Activated CD4-positive, alpha-beta T cell treated with anti-CD3 and anti-CD28 coated beads for 36 hours (primary cell): ENCODE measurements at regions of chr14 and their contacts with region 1.

Region 1: DNA sequence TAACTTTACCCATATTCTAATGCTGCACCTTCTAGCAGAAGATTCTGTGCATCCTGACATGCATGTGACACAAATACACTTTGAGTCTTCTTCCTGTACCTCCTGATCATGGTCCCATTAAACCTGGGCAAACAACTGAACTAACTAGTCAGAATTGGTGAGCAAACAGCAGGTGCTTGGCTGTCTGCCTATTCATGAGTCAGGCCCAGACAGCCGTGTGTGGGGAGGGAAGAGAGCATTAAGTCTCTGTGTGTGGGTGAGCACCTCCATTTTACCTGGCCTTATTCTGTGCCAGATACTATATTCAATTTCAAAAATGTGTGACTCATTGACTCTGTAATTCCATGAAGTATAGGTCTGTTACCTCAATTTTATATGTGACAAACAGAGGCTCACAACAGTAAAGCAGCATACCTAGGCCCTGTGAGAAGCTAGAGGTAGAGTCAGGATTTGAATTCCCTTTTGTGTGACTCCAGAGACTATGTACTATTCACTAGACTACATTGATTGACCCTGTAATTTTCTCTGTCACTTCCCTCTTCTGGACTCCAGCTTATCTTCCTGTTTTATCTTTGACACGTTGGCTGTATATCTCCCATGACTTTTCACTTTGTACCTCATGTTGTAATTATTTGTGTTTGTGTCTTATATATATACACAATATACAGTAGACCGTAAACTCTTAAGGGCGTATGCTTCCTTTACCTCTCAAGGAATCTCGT is 32.2 kb downstream of the SUSD6 start:
- DNase-seq: peak; percentile 89
- ATAC-seq: peak; percentile 95
- H3K4me3 Mint-ChIP-seq: peak overlapping the region; percentile 0
- H3K27ac Mint-ChIP-seq: peak overlapping the region; percentile 93
- H3K4me1 Mint-ChIP-seq: peaks cover 83% of the 10 kb centered on the region
- H3K27me3 Mint-ChIP-seq: no peaks in the 10 kb centered on the region

Region 2: DNA sequence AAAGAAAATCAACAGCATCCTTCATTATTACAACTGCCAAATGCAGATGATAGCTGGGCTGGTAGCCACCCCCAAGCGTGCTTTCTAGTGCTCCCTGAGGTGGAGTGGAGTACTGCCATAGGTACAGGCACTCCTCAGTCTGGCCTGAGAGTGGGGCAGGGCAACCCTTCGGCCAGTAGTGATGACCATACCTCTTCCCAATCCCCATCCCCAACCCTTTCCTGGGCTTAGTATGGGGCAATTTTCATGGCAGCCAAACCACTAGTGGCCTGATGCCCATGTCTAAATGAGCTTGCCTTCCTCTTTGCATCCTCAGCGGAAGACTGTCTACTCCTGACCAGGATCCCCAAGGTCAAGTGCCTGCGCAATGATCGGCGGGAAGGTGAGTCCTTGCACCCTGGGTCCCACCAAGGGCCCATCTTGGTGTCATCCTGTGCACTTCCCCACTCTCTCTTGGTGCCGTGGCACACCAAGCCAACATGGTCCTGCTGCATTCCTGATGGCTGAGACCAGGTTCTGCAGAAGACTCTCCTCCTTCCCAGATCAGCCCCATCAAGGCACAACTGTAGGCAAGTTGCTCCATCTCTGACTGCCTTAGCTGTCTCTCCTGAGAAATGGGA is 317.8 kb before region 1 on chr14:
- CTCF ChIA-PET with region 1: no interaction called
- POLR2A ChIA-PET with region 1: no interaction called
- intact Hi-C with region 1: no loop called
- DNase-seq: no peak
- ATAC-seq: no peak
- H3K4me3 Mint-ChIP-seq: no peak overlapping the region
- H3K27ac Mint-ChIP-seq: no peak overlapping the region
- H3K4me1 Mint-ChIP-seq: no peaks in the 10 kb centered on the region
- H3K27me3 Mint-ChIP-seq: no peaks in the 10 kb centered on the region

Region 3: GRCh38 chr14:69625299-69626131 is 18.1 kb before region 1 on chr14:
- CTCF ChIA-PET with region 1: interaction called, 10 read pairs
- POLR2A ChIA-PET with region 1: interaction called, 5 read pairs
- intact Hi-C with region 1: no loop called
- DNase-seq: peak; percentile 89
- ATAC-seq: peak; percentile 81
- H3K4me3 Mint-ChIP-seq: peak overlapping the region; percentile 66
- H3K27ac Mint-ChIP-seq: peak overlapping the region; percentile 96
- H3K4me1 Mint-ChIP-seq: peaks cover 96% of the 10 kb centered on the region
- H3K27me3 Mint-ChIP-seq: no peaks in the 10 kb centered on the region

Region 4: GRCh38 chr14:69657950-69658355 is 14.3 kb after region 1 on chr14:
- CTCF ChIA-PET with region 1: interaction called, 4 read pairs
- POLR2A ChIA-PET with region 1: no interaction called
- intact Hi-C with region 1: loop called (anchors 2 kb)
- DNase-seq: no peak
- ATAC-seq: no peak
- H3K4me3 Mint-ChIP-seq: no peak overlapping the region
- H3K27ac Mint-ChIP-seq: peak overlapping the region; percentile 53
- H3K4me1 Mint-ChIP-seq: peaks cover 85% of the 10 kb centered on the region
- H3K27me3 Mint-ChIP-seq: no peaks in the 10 kb centered on the region

Region 5: DNA sequence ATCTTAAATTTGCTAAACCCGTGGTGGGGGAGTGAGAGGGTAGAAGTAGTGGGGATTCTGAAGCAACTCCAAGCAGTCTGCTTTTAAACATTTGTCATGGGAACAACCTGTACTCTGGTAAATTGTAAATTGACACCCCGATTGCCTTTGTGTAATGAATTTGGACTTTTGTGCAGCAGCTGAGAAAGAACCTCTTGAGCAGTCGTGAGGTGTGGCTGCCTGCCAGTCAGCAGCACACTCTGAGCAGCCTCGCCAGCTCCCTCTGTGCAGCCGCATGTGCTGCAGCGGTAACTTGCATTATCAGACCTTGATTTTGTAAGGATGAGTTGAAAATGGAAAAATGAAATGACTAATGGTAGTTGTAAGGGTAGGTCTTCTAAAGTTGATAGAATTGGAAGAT is 42.1 kb after region 1 on chr14:
- CTCF ChIA-PET with region 1: interaction called, 5 read pairs
- POLR2A ChIA-PET with region 1: no interaction called
- intact Hi-C with region 1: loop called in 1 of 2 experiments (anchors 1 kb)
- DNase-seq: peak; percentile 78
- ATAC-seq: peak; percentile 74
- H3K4me3 Mint-ChIP-seq: peak overlapping the region; percentile 49
- H3K27ac Mint-ChIP-seq: peak overlapping the region; percentile 94
- H3K4me1 Mint-ChIP-seq: peaks cover 81% of the 10 kb centered on the region
- H3K27me3 Mint-ChIP-seq: no peaks in the 10 kb centered on the region